ENCODE measurements at regions of chr18 and their contacts with region 1.

Region 1: DNA sequence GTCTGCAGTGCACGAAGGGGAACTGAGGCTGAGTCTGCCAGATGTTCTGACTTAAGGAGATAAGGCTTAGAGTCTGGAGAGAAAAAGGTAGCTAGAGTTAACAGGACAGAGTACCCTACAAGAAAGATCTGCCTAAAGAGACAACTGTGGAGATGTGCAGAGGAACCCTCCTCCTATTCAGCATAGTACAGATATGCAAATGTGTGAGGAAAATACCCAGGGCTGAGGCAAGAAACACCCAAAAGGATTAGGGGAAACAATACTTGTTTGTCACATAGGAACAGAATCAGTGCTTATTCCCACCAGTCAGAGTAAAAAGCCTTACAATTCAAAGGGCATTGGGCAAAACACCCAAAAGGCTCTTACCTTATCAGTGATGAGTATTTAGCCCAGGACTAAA is 67.8 kb downstream of the SS18 start:
- H3K4me3 Mint-ChIP-seq: no peak overlapping the region
- H3K27ac Mint-ChIP-seq: no peak overlapping the region
- H3K4me1 Mint-ChIP-seq: peaks cover 7% of the 10 kb centered on the region
- H3K27me3 Mint-ChIP-seq: no peaks in the 10 kb centered on the region

Region 2: DNA sequence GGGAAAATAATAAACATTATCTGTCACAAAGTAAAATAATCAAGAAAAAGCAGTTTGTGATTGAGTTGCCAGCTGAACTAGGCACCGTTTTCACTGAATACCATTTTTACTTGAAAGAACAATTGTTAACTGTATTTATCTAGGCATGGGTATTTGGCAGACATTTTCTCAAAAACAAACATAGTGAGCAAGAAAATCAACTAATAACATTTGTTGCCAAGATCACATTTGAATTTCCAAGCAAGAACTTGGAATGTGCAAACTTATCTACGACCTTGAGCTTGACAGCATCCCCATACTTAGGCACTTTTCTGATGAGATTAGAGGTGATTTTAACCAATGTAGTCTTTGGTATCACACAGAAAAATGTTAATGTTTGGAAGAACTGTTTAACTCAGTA is 51.2 kb after region 1 on chr18:
- intact Hi-C with region 1: loop called (anchors 5 kb)
- H3K4me3 Mint-ChIP-seq: no peak overlapping the region
- H3K27ac Mint-ChIP-seq: no peak overlapping the region
- H3K4me1 Mint-ChIP-seq: peaks cover 10% of the 10 kb centered on the region
- H3K27me3 Mint-ChIP-seq: no peaks in the 10 kb centered on the region

Region 3: DNA sequence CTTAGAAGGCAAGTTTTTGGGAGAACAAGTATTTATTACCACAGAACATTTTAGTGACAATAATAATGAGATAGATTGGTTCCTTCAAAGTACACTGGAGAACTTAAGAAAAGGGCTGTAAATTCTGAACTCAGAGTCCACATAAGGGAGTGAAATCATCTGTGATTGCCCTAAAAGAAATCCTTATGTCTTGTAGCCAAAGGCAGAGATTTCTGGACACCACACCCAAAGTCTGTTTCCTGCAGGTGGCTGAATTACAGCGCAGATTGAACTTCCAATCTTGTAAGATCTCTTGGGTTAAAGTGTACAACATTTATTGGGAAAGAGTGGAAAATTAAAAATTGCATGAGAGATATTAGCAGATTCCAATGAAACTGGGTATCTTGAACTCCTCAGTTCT is 347.5 kb after region 1 on chr18:
- intact Hi-C with region 1: no loop called
- H3K4me3 Mint-ChIP-seq: no peak overlapping the region
- H3K27ac Mint-ChIP-seq: no peak overlapping the region
- H3K4me1 Mint-ChIP-seq: no peaks in the 10 kb centered on the region
- H3K27me3 Mint-ChIP-seq: no peaks in the 10 kb centered on the region

Measured in dendritic cell treated with granulocyte-macrophage colony-stimulating factor and Interleukin-4, amounts not matched to agents 40 ng/mL and 50 ng/mL, for 4 days (primary cell).